CD8-positive, alpha-beta T cell (primary cell): ENCODE measurements at regions of chr2 and their contacts with region 1.

Region 1: GRCh38 chr2:197011799-197012641 is 85.5 kb upstream of the PGAP1 start:
- DNase-seq: peak in 3 of 9 experiments; percentile 14 to 69 (median 57)
- ATAC-seq: peak; percentile 59
- H3K4me3 ChIP-seq: no peak overlapping the region
- H3K4me3 Mint-ChIP-seq: no peak overlapping the region
- H3K27ac ChIP-seq: no peak overlapping the region
- H3K27ac Mint-ChIP-seq: peak overlapping the region; percentile 46
- H3K4me1 ChIP-seq: no peaks in the 10 kb centered on the region
- H3K4me1 Mint-ChIP-seq: peaks cover 6% of the 10 kb centered on the region
- H3K27me3 ChIP-seq: no peaks in the 10 kb centered on the region
- H3K27me3 Mint-ChIP-seq: no peaks in the 10 kb centered on the region
- CTCF ChIP-seq: peak; percentile 78

Region 2: DNA sequence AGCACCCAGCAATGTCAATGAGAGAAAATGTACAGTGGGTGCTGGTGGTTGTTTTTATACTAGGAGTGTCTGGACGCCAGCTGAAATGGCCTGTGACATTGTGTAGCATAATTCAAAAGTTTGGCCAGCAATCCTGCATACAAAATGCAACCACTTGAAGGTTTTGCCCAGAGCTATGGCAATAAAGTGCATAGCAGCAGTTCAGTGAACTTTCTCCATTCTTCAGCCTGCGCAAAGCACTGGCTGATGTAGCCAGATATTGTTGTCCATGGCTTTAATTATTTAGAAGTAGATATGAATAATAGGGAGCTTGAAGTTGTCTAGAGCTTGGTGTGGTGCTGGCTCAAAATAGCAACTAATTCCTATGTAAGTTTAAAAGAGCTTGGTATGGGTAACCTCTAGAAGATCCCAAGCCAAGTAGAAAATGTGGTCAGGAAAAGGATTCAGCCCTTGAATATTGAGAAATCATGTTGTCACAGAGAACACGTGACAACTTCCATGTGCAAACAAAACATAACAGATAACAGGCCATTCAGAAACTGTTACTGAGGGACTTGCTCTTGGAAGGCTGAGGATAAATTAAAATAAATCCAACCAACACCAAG is 52.2 kb before region 1 on chr2:
- CTCF ChIA-PET with region 1: no interaction called
- POLR2A ChIA-PET with region 1: no interaction called
- intact Hi-C with region 1: no loop called
- DNase-seq: no peak
- ATAC-seq: no peak
- H3K4me3 ChIP-seq: no peak overlapping the region
- H3K4me3 Mint-ChIP-seq: no peak overlapping the region
- H3K27ac ChIP-seq: no peak overlapping the region
- H3K27ac Mint-ChIP-seq: no peak overlapping the region
- H3K4me1 ChIP-seq: no peaks in the 10 kb centered on the region
- H3K4me1 Mint-ChIP-seq: peaks cover 3% of the 10 kb centered on the region
- H3K27me3 ChIP-seq: no peaks in the 10 kb centered on the region
- H3K27me3 Mint-ChIP-seq: no peaks in the 10 kb centered on the region
- CTCF ChIP-seq: no peak

Region 3: GRCh38 chr2:196971574-196972279 is 40.3 kb before region 1 on chr2:
- CTCF ChIA-PET with region 1: no interaction called
- POLR2A ChIA-PET with region 1: no interaction called
- intact Hi-C with region 1: no loop called
- DNase-seq: no peak
- ATAC-seq: no peak
- H3K4me3 ChIP-seq: no peak overlapping the region
- H3K4me3 Mint-ChIP-seq: no peak overlapping the region
- H3K27ac ChIP-seq: no peak overlapping the region
- H3K27ac Mint-ChIP-seq: no peak overlapping the region
- H3K4me1 ChIP-seq: no peaks in the 10 kb centered on the region
- H3K4me1 Mint-ChIP-seq: no peaks in the 10 kb centered on the region
- H3K27me3 ChIP-seq: no peaks in the 10 kb centered on the region
- H3K27me3 Mint-ChIP-seq: no peaks in the 10 kb centered on the region
- CTCF ChIP-seq: no peak

Region 4: GRCh38 chr2:197028230-197028629 is 16.2 kb after region 1 on chr2:
- CTCF ChIA-PET with region 1: interaction called, 11 read pairs
- POLR2A ChIA-PET with region 1: interaction called, 3 read pairs
- intact Hi-C with region 1: no loop called
- DNase-seq: no peak
- ATAC-seq: no peak
- H3K4me3 ChIP-seq: no peak overlapping the region
- H3K4me3 Mint-ChIP-seq: no peak overlapping the region
- H3K27ac ChIP-seq: no peak overlapping the region
- H3K27ac Mint-ChIP-seq: peak overlapping the region; percentile 73
- H3K4me1 ChIP-seq: peaks cover 14% of the 10 kb centered on the region
- H3K4me1 Mint-ChIP-seq: peaks cover 28% of the 10 kb centered on the region
- H3K27me3 ChIP-seq: no peaks in the 10 kb centered on the region
- H3K27me3 Mint-ChIP-seq: no peaks in the 10 kb centered on the region
- CTCF ChIP-seq: no peak

Region 5: DNA sequence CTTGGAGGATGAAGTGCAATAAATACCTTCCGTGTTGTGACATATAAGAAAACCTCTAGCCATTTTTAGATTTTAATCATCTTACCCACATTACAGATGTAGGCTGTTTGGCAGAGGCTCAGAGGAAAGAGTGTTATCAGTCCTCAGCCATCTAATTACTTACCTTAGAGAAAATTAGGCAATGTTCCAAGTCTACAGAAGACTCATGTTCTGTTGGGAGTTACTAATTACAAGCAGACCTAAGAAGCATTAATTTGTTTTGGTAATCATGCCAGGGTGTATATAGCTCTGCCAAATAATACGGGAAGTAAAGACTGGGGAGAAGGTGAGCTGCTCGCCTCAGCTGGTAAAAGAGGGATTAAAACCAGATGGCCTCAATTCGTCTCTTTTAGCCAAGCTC is 40.3 kb after region 1 on chr2:
- CTCF ChIA-PET with region 1: no interaction called
- POLR2A ChIA-PET with region 1: no interaction called
- intact Hi-C with region 1: no loop called
- DNase-seq: no peak
- ATAC-seq: no peak
- H3K4me3 ChIP-seq: no peak overlapping the region
- H3K4me3 Mint-ChIP-seq: no peak overlapping the region
- H3K27ac ChIP-seq: no peak overlapping the region
- H3K27ac Mint-ChIP-seq: peak overlapping the region; percentile 60
- H3K4me1 ChIP-seq: no peaks in the 10 kb centered on the region
- H3K4me1 Mint-ChIP-seq: peaks cover 7% of the 10 kb centered on the region
- H3K27me3 ChIP-seq: no peaks in the 10 kb centered on the region
- H3K27me3 Mint-ChIP-seq: no peaks in the 10 kb centered on the region
- CTCF ChIP-seq: no peak

Region 6: DNA sequence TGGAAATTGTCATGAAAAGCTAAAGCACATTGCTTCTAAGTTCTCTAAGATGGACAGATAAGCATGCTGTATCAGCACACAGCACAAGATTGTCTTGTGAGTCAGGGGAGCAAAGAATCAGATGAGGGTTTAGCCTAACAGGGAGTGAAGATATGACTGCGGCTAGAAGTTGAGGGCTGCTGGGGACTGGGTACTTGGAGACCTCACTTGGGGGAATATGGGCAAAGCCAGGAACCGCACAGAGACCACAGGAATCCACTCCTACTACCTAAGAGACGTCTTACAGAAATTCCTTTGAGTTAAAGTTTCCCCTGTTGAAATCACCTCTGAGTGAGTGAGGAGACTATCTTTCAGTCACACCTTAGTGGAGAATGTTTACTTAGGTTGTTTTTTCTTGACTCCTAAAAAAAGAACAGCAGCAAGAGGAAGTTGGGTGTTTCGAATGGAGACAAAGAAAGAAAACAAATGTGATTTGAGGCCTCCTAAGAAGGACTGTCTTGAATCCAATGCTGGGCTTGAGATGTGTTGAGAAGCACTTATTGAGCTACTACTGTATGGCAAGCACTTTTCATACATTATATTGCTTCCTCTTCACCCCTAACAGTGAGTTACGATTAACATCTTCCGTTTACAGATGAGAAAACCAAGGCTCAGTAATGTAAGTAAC is 197.9 kb after region 1 on chr2:
- CTCF ChIA-PET with region 1: no interaction called
- POLR2A ChIA-PET with region 1: no interaction called
- intact Hi-C with region 1: no loop called
- DNase-seq: peak in 7 of 9 experiments; percentile 22 to 73 (median 48)
- ATAC-seq: peak; percentile 10
- H3K4me3 ChIP-seq: peak overlapping the region in 1 of 2 experiments; percentile 11
- H3K4me3 Mint-ChIP-seq: peak overlapping the region; percentile 54
- H3K27ac ChIP-seq: peak overlapping the region; percentile 24 to 73
- H3K27ac Mint-ChIP-seq: peak overlapping the region; percentile 100
- H3K4me1 ChIP-seq: peaks cover 99% of the 10 kb centered on the region
- H3K4me1 Mint-ChIP-seq: peaks cover 97% of the 10 kb centered on the region
- H3K27me3 ChIP-seq: no peaks in the 10 kb centered on the region
- H3K27me3 Mint-ChIP-seq: no peaks in the 10 kb centered on the region
- CTCF ChIP-seq: no peak